ENCODE measurements at regions of chr4 and their contacts with region 1.

Region 1: GRCh38 chr4:78634011-78634664 is 82.6 kb downstream of the ANXA3 start:
- DNase-seq: no peak
- ATAC-seq: no peak
- H3K4me3 Mint-ChIP-seq: no peak overlapping the region
- H3K27ac Mint-ChIP-seq: no peak overlapping the region
- H3K4me1 Mint-ChIP-seq: peaks cover 12% of the 10 kb centered on the region
- H3K27me3 Mint-ChIP-seq: no peaks in the 10 kb centered on the region
- CTCF ChIP-seq: no peak

Region 2: DNA sequence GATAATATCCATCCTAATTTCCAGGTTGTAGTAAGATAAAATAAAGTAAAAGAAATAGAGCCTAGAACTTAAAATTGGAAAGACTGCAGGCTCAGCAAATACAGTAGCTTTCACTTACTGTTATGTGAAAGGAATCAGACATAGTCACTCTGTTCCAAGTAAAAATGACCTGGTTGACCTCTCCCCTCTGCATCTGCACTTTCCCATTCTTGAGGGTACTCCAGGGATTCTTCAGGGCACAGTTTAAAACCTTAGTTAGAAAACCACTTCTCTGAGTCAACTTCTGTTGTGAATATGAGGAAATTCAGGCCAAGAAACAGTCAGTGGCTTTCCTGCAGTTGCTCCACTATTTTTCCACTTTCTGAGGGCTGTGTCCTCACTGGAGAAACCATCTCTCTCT is 534.1 kb before region 1 on chr4:
- CTCF ChIA-PET with region 1: no interaction called
- POLR2A ChIA-PET with region 1: no interaction called
- intact Hi-C with region 1: no loop called
- DNase-seq: no peak
- ATAC-seq: no peak
- H3K4me3 Mint-ChIP-seq: no peak overlapping the region
- H3K27ac Mint-ChIP-seq: no peak overlapping the region
- H3K4me1 Mint-ChIP-seq: no peaks in the 10 kb centered on the region
- H3K27me3 Mint-ChIP-seq: peaks cover 3% of the 10 kb centered on the region
- CTCF ChIP-seq: no peak

Region 3: DNA sequence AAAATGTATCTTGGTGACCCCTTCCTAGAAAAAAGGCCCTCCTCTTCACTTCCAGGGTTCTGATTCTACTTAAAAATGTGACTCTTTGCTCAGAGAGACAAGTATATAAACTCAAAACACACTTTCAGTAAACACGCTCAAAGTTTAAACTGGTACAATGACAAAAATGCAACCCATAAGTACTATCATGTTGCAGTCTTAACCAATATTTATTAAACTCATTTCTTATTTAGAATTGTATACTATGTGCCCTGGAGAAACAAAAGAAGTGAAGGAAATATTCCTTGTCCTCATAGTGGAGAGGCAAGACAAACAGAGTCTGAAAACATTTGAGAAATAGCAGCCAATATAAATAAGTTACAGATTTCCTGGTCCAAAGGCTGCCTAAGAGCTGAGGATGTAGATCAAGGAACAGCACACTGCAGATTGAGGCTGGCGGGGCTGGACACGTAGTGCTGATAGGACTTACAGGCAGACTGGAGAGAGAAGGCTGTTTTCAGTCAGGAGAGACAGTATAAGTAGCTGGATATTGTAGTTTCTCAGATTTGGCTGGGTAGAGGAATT is 121.7 kb before region 1 on chr4:
- CTCF ChIA-PET with region 1: no interaction called
- POLR2A ChIA-PET with region 1: no interaction called
- intact Hi-C with region 1: no loop called
- DNase-seq: no peak
- ATAC-seq: no peak
- H3K4me3 Mint-ChIP-seq: no peak overlapping the region
- H3K27ac Mint-ChIP-seq: no peak overlapping the region
- H3K4me1 Mint-ChIP-seq: no peaks in the 10 kb centered on the region
- H3K27me3 Mint-ChIP-seq: no peaks in the 10 kb centered on the region
- CTCF ChIP-seq: no peak

Region 4: DNA sequence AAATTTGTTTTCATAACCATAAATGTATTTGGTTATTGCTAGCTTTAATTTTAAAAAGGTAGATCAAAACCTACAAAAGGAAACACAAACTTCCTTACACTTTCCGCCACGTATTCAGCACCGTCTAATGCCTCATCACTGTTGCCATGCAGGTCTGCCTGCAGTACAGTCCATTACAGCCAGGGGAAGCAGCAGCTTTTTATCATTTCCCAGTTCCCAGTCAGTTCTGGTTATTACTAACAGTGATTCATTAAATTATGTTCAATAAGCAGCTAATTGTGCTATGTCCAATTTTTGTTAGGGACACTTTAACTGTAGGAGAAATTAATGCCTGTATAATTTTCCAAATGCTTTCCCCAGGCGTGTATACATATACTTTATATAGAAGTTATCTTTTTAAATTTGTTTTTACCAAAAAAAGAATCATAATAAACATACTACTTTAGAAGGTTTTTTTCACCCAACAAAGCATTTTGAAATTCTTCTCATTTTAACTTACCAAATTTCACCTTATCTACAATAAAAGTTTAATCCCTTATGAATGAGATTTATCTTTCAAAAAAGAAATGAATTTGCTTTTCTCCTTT is 10.7 kb after region 1 on chr4:
- CTCF ChIA-PET with region 1: interaction called, 12 read pairs
- POLR2A ChIA-PET with region 1: interaction called, 4 read pairs
- intact Hi-C with region 1: no loop called
- DNase-seq: peak; percentile 70
- ATAC-seq: peak; percentile 98
- H3K4me3 Mint-ChIP-seq: no peak overlapping the region
- H3K27ac Mint-ChIP-seq: no peak overlapping the region
- H3K4me1 Mint-ChIP-seq: peaks cover 12% of the 10 kb centered on the region
- H3K27me3 Mint-ChIP-seq: no peaks in the 10 kb centered on the region
- CTCF ChIP-seq: peak; percentile 83

Region 5: DNA sequence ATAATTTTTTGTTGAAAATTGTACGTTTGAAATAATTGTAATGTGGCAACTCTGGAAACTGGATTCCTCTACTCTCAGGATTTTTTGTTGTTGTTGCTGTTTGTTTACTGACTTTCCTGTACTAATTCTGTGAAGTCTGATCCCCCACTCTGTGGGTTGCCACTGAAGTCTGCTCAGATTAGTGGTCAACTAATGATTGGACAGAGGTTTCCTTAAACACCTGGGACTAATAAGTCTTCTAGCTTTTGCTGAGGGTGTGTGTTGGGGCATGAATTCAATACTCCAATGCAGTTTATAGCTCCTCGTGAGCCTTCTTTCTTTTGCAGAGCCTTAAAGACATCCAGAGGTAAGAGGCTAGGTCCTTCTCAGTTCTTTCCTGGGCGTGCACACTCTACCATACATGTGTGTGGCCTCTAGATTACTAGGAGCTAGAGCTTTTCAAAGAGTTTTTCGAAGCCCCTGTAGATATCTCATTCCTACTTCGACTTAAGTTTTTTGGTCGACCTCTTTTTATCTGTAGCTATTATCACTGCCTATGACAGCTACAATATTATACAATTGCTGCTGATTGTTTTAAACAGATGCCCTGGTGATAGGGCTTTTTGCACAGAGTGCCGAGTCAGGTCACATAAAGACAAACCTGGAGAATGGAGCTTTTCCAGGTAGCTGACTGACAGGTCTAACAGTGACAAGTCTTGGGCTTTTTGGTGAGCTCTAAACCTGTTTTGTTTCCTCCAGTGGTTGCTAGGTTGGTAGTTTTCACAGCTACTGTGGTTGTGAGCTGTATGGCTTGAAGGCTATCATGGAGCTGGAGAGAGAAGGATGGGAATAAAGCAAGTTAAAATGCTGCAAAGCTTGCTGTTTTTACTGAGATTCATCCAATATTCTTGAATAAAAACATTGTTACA is 176.0 kb after region 1 on chr4:
- CTCF ChIA-PET with region 1: no interaction called
- POLR2A ChIA-PET with region 1: no interaction called
- intact Hi-C with region 1: no loop called
- DNase-seq: no peak
- ATAC-seq: no peak
- H3K4me3 Mint-ChIP-seq: no peak overlapping the region
- H3K27ac Mint-ChIP-seq: no peak overlapping the region
- H3K4me1 Mint-ChIP-seq: peaks cover 6% of the 10 kb centered on the region
- H3K27me3 Mint-ChIP-seq: no peaks in the 10 kb centered on the region
- CTCF ChIP-seq: no peak

Region 6: GRCh38 chr4:78880874-78881492 is 246.8 kb after region 1 on chr4:
- CTCF ChIA-PET with region 1: no interaction called
- POLR2A ChIA-PET with region 1: no interaction called
- intact Hi-C with region 1: no loop called
- DNase-seq: no peak
- ATAC-seq: no peak
- H3K4me3 Mint-ChIP-seq: no peak overlapping the region
- H3K27ac Mint-ChIP-seq: no peak overlapping the region
- H3K4me1 Mint-ChIP-seq: no peaks in the 10 kb centered on the region
- H3K27me3 Mint-ChIP-seq: no peaks in the 10 kb centered on the region
- CTCF ChIP-seq: no peak